GM12878 (cell line): ENCODE measurements at regions of chr5 and their contacts with region 1.

Region 1: DNA sequence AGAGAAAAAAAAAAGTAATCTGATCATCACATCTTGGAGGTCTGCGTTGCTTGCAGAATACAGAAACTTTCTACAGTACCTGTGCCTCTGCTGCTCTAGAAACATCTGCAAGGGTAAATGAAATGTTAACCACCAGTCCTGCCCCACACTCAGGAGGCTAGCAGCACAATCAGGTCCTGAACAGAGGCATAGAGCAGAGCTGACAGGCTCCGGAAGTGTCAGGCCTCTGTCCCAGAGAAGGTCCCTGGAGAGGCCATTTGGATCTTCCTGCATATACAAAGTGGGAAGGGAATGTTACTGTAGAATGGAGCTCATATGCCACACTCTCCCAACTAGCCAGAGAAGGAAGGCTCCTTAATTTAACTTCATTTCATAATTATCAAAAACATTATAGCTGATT is 7.2 kb downstream of the NRG2 start:
- DNase-seq: no peak
- ATAC-seq: peak; percentile 19
- H3K4me3 ChIP-seq: peak overlapping the region; percentile 31; the same call in 1 of the 2 replicates
- H3K27ac ChIP-seq: peak overlapping the region; percentile 7; the same call in 1 of the 2 replicates
- H3K4me1 ChIP-seq: no peaks in the 10 kb centered on the region; the same call in 1 of the 2 replicates
- H3K27me3 ChIP-seq: no peaks in the 10 kb centered on the region
- CTCF ChIP-seq: no peak
- EP300 ChIP-seq: no peak
- POLR2A ChIP-seq: no peak
- RAD21 ChIP-seq: no peak

Region 2: GRCh38 chr5:140005145-140005591 is 30.7 kb before region 1 on chr5:
- CTCF ChIA-PET with region 1: interaction called, 14 read pairs
- POLR2A ChIA-PET with region 1: interaction called, 21 read pairs
- RAD21 ChIA-PET with region 1: interaction called, 204 read pairs
- SMC1A ChIA-PET with region 1: interaction called, 394 read pairs
- in situ Hi-C with region 1: no loop called
- intact Hi-C with region 1: loop called (anchors 2 kb)
- DNase-seq: peak; percentile 96
- ATAC-seq: peak; percentile 98
- H3K4me3 ChIP-seq: no peak overlapping the region
- H3K27ac ChIP-seq: peak overlapping the region; percentile 49
- H3K4me1 ChIP-seq: peaks cover 26% of the 10 kb centered on the region
- H3K27me3 ChIP-seq: no peaks in the 10 kb centered on the region
- CTCF ChIP-seq: no peak
- EP300 ChIP-seq: peak; percentile 35 to 64; a peak in 2 of 4 replicates
- POLR2A ChIP-seq: peak; percentile 66
- RAD21 ChIP-seq: no peak

Region 3: DNA sequence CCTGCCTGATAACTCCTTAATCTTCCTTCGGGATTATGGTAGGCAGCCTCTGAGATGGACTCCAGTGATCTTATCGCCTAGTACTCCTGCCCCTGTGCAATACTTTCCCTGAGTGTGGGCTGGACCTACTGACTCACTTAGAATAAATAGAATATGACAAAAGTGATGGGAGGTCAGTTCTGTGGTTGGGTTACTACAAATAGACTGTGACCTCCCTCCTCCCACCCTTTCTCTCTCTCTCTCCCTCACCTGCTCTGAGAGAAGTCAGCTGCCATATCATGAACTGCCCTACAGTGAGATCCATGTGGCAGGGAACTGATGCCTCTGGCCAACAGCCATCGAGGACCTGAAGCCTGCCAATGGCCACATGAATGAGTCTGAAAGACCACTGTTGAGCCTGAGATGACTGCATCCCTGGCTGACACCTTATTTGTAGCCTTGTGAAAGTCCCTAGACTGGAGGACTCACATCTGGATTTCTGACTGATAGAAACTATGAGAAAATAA is 24.5 kb before region 1 on chr5:
- CTCF ChIA-PET with region 1: interaction called, 8 read pairs
- POLR2A ChIA-PET with region 1: interaction called, 12 read pairs
- RAD21 ChIA-PET with region 1: interaction called, 204 read pairs
- SMC1A ChIA-PET with region 1: interaction called, 394 read pairs
- in situ Hi-C with region 1: no loop called
- intact Hi-C with region 1: loop called (anchors 2 kb)
- DNase-seq: peak; percentile 83
- ATAC-seq: peak; percentile 95
- H3K4me3 ChIP-seq: no peak overlapping the region
- H3K27ac ChIP-seq: peak overlapping the region; percentile 63
- H3K4me1 ChIP-seq: peaks cover 17% of the 10 kb centered on the region
- H3K27me3 ChIP-seq: no peaks in the 10 kb centered on the region
- CTCF ChIP-seq: no peak
- EP300 ChIP-seq: peak; percentile 72 to 83
- POLR2A ChIP-seq: 0 out of 2 replicates have a peak, but pooled peaks have one; percentile 23
- RAD21 ChIP-seq: no peak; the same call in 1 of the 2 replicates

Region 4: DNA sequence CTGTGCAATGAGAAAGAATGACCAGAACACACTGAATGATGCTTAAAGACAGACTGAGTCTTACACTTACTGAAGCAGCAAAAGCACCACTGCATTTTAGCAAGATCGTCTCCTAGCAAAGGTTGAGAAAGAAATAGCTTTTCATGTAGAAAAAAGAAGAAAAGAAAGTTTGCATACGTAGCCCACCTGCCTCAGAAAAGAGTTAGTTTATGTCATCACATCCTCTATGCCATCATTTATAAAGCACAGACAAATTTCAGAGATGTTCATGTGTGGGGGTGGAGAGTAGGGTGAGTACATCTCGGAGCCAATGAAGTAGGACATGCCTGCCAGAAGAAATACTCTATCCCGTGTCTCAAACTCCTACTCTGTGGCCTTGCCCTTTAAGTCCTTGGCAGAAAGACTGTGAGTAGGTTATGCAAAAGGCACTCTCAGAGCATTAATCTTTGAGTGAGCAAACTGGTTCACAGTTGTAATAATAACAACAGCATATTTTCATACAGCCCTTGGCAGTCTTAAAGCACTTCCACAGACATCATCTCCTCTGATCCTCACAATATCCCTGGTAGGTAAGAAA is 15.2 kb before region 1 on chr5:
- CTCF ChIA-PET with region 1: interaction called, 13 read pairs
- POLR2A ChIA-PET with region 1: interaction called, 14 read pairs
- RAD21 ChIA-PET with region 1: interaction called, 12 read pairs
- SMC1A ChIA-PET with region 1: interaction called, 394 read pairs
- in situ Hi-C with region 1: no loop called
- intact Hi-C with region 1: no loop called
- DNase-seq: no peak
- ATAC-seq: peak; percentile 50
- H3K4me3 ChIP-seq: no peak overlapping the region
- H3K27ac ChIP-seq: no peak overlapping the region
- H3K4me1 ChIP-seq: no peaks in the 10 kb centered on the region; the same call in 1 of the 2 replicates
- H3K27me3 ChIP-seq: no peaks in the 10 kb centered on the region
- CTCF ChIP-seq: no peak
- EP300 ChIP-seq: no peak
- POLR2A ChIP-seq: no peak
- RAD21 ChIP-seq: no peak

Region 5: DNA sequence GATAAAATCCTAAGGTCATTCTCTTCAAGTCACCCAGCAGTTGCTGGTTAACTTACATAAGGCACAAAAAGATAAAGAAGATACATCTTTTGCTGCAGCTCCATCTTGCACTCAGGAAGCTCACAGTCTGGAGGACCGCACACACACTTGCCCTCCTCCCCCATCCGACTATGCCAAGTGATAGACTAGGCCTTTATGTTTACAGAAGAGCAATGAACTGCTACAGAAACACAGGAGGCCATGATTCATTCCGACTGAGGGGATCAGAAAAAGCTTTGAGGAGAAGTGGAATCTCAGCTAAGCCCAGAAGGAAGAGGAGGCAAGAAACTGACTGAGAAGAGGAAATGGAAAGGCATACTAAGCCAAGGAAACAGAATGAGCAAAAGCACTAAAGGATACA is 10.1 kb before region 1 on chr5:
- CTCF ChIA-PET with region 1: interaction called, 13 read pairs
- POLR2A ChIA-PET with region 1: interaction called, 14 read pairs
- RAD21 ChIA-PET with region 1: interaction called, 12 read pairs
- SMC1A ChIA-PET with region 1: interaction called, 394 read pairs
- in situ Hi-C with region 1: no loop called
- intact Hi-C with region 1: no loop called
- DNase-seq: no peak
- ATAC-seq: no peak
- H3K4me3 ChIP-seq: no peak overlapping the region
- H3K27ac ChIP-seq: no peak overlapping the region
- H3K4me1 ChIP-seq: no peaks in the 10 kb centered on the region
- H3K27me3 ChIP-seq: no peaks in the 10 kb centered on the region
- CTCF ChIP-seq: no peak
- EP300 ChIP-seq: no peak
- POLR2A ChIP-seq: no peak
- RAD21 ChIP-seq: no peak

Region 6: DNA sequence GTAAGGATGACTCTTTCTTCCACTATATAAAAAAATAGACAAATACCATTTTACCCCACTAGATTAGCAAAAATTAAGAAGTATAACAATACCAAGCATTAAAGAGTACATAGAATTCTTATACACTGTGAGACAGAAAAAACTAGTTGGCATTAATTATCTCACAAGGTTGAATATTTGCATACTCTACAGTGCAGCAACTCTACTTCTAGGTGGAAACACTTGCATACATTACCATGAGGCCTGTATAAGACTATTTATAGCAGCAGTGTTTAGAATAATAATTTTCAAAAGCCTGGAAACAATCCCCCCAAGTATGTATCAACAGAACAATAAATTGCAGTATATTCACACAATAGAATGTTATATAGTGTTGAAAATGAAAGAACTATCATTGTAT is 59.0 kb after region 1 on chr5:
- CTCF ChIA-PET with region 1: no interaction called
- POLR2A ChIA-PET with region 1: no interaction called
- RAD21 ChIA-PET with region 1: no interaction called
- SMC1A ChIA-PET with region 1: no interaction called
- in situ Hi-C with region 1: no loop called
- intact Hi-C with region 1: no loop called
- DNase-seq: no peak
- ATAC-seq: peak; percentile 60
- H3K4me3 ChIP-seq: no peak overlapping the region
- H3K27ac ChIP-seq: no peak overlapping the region
- H3K4me1 ChIP-seq: no peaks in the 10 kb centered on the region
- H3K27me3 ChIP-seq: no peaks in the 10 kb centered on the region
- CTCF ChIP-seq: no peak
- EP300 ChIP-seq: no peak
- POLR2A ChIP-seq: no peak
- RAD21 ChIP-seq: no peak